CD14-positive monocyte (primary cell): ENCODE measurements at regions of chr17 and their contacts with region 1.

Region 1: GRCh38 chr17:77451245-77451893 is 310.6 kb downstream of the SEC14L1 start:
- DNase-seq: peak in 2 of 3 donors; percentile 49
- H3K4me3 ChIP-seq: peak overlapping the region; percentile 68 to 89 (median 68)
- H3K4me3 Mint-ChIP-seq: peak overlapping the region; percentile 97 to 98
- H3K27ac ChIP-seq: peak overlapping the region; percentile 57 to 85
- H3K27ac Mint-ChIP-seq: peak overlapping the region; percentile 85 to 95 (median 92)
- H3K4me1 ChIP-seq: peaks cover 71 to 81% of the 10 kb centered on the region in 2 donors
- H3K4me1 Mint-ChIP-seq: peaks cover 84% of the 10 kb centered on the region
- H3K27me3 ChIP-seq: no peaks in the 10 kb centered on the region
- H3K27me3 Mint-ChIP-seq: peaks cover 0 to 3% (median 0%) of the 10 kb centered on the region in 3 donors
- CTCF ChIP-seq: no peak

Region 2: GRCh38 chr17:77420804-77421629 is 30.4 kb before region 1 on chr17:
- intact Hi-C with region 1: no loop called
- DNase-seq: peak in 1 of 3 donors; percentile 28
- H3K4me3 ChIP-seq: peak overlapping the region in 1 of 3 experiments; percentile 53
- H3K4me3 Mint-ChIP-seq: peak overlapping the region; percentile 54 to 77
- H3K27ac ChIP-seq: no peak overlapping the region
- H3K27ac Mint-ChIP-seq: peak overlapping the region in 4 of 7 donors; percentile 13 to 80 (median 46)
- H3K4me1 ChIP-seq: peaks cover 46 to 57% of the 10 kb centered on the region in 2 donors
- H3K4me1 Mint-ChIP-seq: peaks cover 57% of the 10 kb centered on the region
- H3K27me3 ChIP-seq: no peaks in the 10 kb centered on the region
- H3K27me3 Mint-ChIP-seq: peaks cover 0 to 3% (median 1%) of the 10 kb centered on the region in 3 donors
- CTCF ChIP-seq: no peak

Region 3: DNA sequence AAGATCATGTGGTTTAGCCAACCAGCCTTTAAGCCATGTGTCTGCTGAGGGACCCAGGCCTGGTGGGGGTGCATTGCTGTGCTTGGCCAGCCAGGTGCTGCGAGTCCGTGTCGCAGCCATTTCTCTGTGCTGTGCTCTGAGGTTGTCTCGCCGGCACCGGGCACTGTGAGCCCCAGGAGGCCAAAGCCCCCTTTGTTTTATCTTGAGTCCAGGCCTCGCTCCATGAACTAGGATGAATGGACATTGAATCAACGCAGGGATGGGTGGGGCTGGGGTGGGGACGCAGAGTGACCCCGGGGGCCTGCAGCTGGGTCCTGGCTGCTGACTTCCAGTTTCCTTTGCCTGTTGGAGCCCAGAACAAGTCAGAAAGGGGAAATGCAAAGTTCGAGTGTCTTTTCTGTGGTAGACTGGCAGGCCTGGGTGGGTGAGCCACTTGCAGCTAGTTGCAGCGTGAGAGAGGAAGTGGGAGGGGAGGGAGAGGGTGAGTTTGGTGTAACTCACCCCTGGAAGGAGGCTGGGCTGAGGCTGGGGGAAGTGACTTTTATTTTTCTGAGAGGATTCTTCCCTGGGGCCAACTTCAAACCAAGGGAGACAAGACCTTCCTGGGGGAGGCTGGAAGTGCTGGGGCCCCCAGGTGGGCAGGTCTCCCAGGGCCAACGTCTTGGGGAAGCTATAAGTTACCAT is 14.1 kb after region 1 on chr17:
- intact Hi-C with region 1: loop called in 1 of 2 experiments (anchors 2 kb)
- DNase-seq: peak; percentile 93 to 96 (median 94)
- H3K4me3 ChIP-seq: peak overlapping the region in 2 of 3 experiments; percentile 24 to 59
- H3K4me3 Mint-ChIP-seq: peak overlapping the region; percentile 73 to 75
- H3K27ac ChIP-seq: peak overlapping the region; percentile 87 to 96
- H3K27ac Mint-ChIP-seq: peak overlapping the region; percentile 88 to 99 (median 97)
- H3K4me1 ChIP-seq: peaks cover 78 to 86% of the 10 kb centered on the region in 2 donors
- H3K4me1 Mint-ChIP-seq: peaks cover 84% of the 10 kb centered on the region
- H3K27me3 ChIP-seq: no peaks in the 10 kb centered on the region
- H3K27me3 Mint-ChIP-seq: peaks cover 0 to 1% (median 0%) of the 10 kb centered on the region in 3 donors
- CTCF ChIP-seq: no peak

Region 4: GRCh38 chr17:77542551-77543490 is 91.5 kb after region 1 on chr17:
- intact Hi-C with region 1: no loop called
- DNase-seq: peak; percentile 40 to 60 (median 56)
- H3K4me3 ChIP-seq: no peak overlapping the region
- H3K4me3 Mint-ChIP-seq: no peak overlapping the region
- H3K27ac ChIP-seq: no peak overlapping the region
- H3K27ac Mint-ChIP-seq: no peak overlapping the region
- H3K4me1 ChIP-seq: no peaks in the 10 kb centered on the region
- H3K4me1 Mint-ChIP-seq: peaks cover 20% of the 10 kb centered on the region
- H3K27me3 ChIP-seq: no peaks in the 10 kb centered on the region
- H3K27me3 Mint-ChIP-seq: peaks cover 8 to 16% (median 9%) of the 10 kb centered on the region in 3 donors
- CTCF ChIP-seq: peak; percentile 83